ENCODE measurements at regions of chr16 and their contacts with region 1.

Region 1: GRCh38 chr16:2027024-2028010 is 615 bp downstream of the NHERF2 start:
- DNase-seq: no peak
- H3K4me3 ChIP-seq: peak overlapping the region; percentile 58 to 93 (median 74)
- H3K27ac ChIP-seq: peak overlapping the region; percentile 33 to 75
- H3K4me1 ChIP-seq: peaks cover 6 to 27% of the 10 kb centered on the region in 2 donors
- H3K27me3 ChIP-seq: no peaks in the 10 kb centered on the region
- CTCF ChIP-seq: no peak
- POLR2A ChIP-seq: no peak

Region 2: GRCh38 chr16:2071454-2072202 is 44.3 kb after region 1 on chr16:
- intact Hi-C with region 1: loop called (anchors 1 kb)
- DNase-seq: no peak
- H3K4me3 ChIP-seq: no peak overlapping the region
- H3K27ac ChIP-seq: no peak overlapping the region
- H3K4me1 ChIP-seq: no peaks in the 10 kb centered on the region
- H3K27me3 ChIP-seq: no peaks in the 10 kb centered on the region
- CTCF ChIP-seq: no peak
- POLR2A ChIP-seq: no peak

Region 3: DNA sequence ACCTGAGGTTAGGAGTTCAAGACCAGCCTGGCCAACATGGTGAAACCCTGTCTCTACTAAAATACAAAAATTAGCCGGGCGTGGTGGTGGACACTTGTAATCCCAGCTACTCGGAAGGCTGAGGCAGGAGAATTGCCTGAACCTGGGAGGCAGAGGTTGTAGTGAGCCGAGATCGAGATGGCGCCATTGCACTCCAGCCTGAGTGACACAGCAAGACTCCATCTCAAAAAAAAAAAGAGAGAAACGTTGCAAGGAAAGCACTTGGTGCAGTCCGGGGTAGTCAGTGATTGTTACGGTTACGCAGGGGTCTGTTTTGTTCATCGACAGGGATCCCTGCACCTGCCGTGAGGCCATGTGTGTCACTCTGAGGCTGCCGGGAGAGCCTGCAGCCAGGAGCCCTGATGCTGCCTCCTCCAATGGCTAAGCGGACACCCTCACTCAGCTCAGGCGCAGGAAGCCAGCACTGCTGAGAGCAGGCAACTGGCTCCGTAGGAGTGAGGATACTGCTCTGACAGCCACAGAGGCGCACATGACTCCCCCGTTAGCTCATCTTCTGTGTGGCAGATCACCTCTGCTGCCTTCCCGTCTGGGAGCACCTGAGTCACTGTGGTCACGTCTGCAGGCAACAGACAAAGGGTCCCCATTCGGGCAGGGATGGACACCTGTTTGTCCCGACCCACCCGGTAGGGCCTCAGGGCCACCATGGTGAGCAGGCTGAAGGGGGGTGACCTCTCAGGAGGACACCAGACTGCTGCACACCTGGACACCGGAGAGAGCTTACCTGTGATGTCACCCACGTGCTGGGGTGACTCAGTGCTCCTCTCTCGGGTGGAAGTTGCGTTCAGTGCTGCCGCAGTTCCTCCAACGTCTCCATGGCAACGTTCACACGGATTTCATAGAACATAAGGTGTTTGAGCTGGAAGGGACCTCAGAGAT is 115.9 kb after region 1 on chr16:
- intact Hi-C with region 1: loop called (anchors 5 kb)
- DNase-seq: no peak
- H3K4me3 ChIP-seq: no peak overlapping the region
- H3K27ac ChIP-seq: no peak overlapping the region
- H3K4me1 ChIP-seq: no peaks in the 10 kb centered on the region
- H3K27me3 ChIP-seq: no peaks in the 10 kb centered on the region
- CTCF ChIP-seq: no peak
- POLR2A ChIP-seq: no peak

Region 4: GRCh38 chr16:2867987-2868789 is 840.9 kb after region 1 on chr16:
- intact Hi-C with region 1: no loop called
- DNase-seq: peak; percentile 91 to 96
- H3K4me3 ChIP-seq: peak overlapping the region; percentile 54 to 86 (median 71)
- H3K27ac ChIP-seq: peak overlapping the region; percentile 93 to 97
- H3K4me1 ChIP-seq: no peaks in the 10 kb centered on the region
- H3K27me3 ChIP-seq: no peaks in the 10 kb centered on the region
- CTCF ChIP-seq: peak; percentile 98 to 99 (median 99)
- POLR2A ChIP-seq: no peak

Measured in breast epithelium (tissue), 4 donors.